SK-N-SH (cell line): ENCODE measurements at regions of chr13 and their contacts with region 1.

Region 1: DNA sequence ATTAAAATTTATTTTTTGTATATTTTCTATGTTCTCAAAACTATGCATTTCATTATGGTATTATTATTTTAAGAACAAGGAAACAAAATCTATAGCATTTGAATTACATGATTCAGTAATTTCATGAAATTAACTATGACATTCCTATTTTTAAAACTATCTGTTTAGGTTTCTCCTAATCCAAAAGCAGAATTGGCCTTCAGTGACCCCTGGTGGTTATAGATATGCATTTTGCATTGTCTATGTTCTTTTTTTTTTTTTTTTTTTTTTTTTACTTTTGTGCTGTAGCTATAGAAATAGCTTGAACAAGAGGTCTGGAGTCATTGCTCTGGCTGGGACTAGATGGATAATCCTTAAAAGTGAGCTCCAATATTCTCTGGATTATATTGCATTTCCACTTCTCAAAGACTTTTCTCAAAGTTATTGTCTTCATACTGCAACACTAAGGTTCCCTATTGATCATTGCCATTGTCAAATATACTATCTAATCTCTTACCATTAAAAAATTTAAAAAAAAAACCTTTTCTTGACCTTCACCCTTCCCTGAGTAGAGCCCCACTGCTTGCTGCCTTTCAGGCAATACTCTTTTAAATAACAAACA is 15.9 kb upstream of the DNAJC3 start:
- DNase-seq: peak; percentile 39
- H3K4me3 ChIP-seq: no peak overlapping the region
- H3K27ac ChIP-seq: no peak overlapping the region
- H3K4me1 ChIP-seq: no peaks in the 10 kb centered on the region
- H3K27me3 ChIP-seq: no peaks in the 10 kb centered on the region
- CTCF ChIP-seq: peak; percentile 80
- EP300 ChIP-seq: no peak
- RAD21 ChIP-seq: peak; percentile 82

Region 2: GRCh38 chr13:95480131-95480545 is 180.9 kb before region 1 on chr13:
- CTCF ChIA-PET with region 1: no interaction called
- POLR2A ChIA-PET with region 1: no interaction called
- DNase-seq: no peak
- H3K4me3 ChIP-seq: no peak overlapping the region
- H3K27ac ChIP-seq: no peak overlapping the region
- H3K4me1 ChIP-seq: peaks cover 0 to 11% of the 10 kb centered on the region in 2 experiments; a peak in 1 of 4 replicates
- H3K27me3 ChIP-seq: no peaks in the 10 kb centered on the region
- CTCF ChIP-seq: no peak
- EP300 ChIP-seq: no peak
- RAD21 ChIP-seq: no peak

Region 3: DNA sequence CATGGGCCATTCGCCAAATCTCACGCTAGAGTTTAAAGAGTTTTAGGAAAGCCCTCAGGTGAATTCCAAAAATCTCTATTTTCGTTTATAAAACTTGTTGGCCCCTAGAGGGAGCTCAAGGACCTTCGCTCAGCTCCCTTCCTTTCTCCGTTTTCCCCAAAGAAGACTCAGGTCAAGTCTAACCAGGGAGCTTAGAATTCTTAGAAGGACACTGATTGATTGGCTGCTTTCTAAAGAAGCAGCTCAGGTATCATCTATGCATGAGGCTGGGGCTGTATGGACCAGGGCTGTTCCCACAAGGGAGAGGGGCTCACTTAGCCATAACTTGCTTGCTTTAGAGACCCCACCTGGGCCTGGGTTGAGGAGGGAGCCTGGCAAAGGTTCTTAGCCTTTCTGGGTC is 37.1 kb before region 1 on chr13:
- CTCF ChIA-PET with region 1: interaction called, 26 read pairs
- POLR2A ChIA-PET with region 1: no interaction called
- DNase-seq: peak; percentile 52
- H3K4me3 ChIP-seq: no peak overlapping the region
- H3K27ac ChIP-seq: no peak overlapping the region
- H3K4me1 ChIP-seq: no peaks in the 10 kb centered on the region
- H3K27me3 ChIP-seq: no peaks in the 10 kb centered on the region
- CTCF ChIP-seq: peak; percentile 80
- EP300 ChIP-seq: no peak
- RAD21 ChIP-seq: peak; percentile 88

Region 4: GRCh38 chr13:95644601-95645052 is 16.5 kb before region 1 on chr13 and contains the start of gene DZIP1:
- CTCF ChIA-PET with region 1: interaction called, 11 read pairs
- POLR2A ChIA-PET with region 1: no interaction called
- DNase-seq: peak; percentile 90
- H3K4me3 ChIP-seq: peak within 1 kb of the TSS; percentile 79 to 85
- H3K27ac ChIP-seq: peak within 1 kb of the TSS; percentile 64 to 90
- H3K4me1 ChIP-seq: peaks cover 0 to 21% of the 10 kb centered on the region in 2 experiments; a peak in 2 of 4 replicates
- H3K27me3 ChIP-seq: no peaks in the 10 kb centered on the region
- CTCF ChIP-seq: no peak
- EP300 ChIP-seq: peak in 1 of 2 experiments; percentile 14; a peak in 1 of 4 replicates
- RAD21 ChIP-seq: no peak
- polyA plus RNA-seq, gene DZIP1: 15.0 and 15.2 TPM in 2 replicates

Region 5: DNA sequence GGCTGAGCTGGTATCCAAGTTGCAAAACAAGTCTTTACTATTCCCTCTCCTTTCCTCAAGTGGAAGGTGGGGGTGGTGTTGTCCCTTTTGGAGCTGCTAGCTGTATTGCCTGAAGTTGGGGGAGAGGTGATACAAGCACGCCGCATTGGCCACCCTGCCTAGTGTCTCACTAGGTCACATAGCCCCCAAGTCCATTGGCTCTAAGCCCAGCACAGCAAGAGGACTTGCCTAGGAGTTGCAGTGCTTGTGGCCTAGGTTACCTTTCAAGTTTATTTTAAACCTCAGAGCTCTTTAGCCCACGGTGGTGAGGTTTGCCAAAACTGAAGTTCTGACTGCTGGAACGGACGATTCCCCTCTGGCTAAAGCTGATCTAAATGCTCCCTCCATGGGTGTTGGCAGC is 10.5 kb after region 1 on chr13:
- CTCF ChIA-PET with region 1: interaction called, 10 read pairs
- POLR2A ChIA-PET with region 1: no interaction called
- DNase-seq: no peak
- H3K4me3 ChIP-seq: no peak overlapping the region; a peak in 1 of 4 replicates
- H3K27ac ChIP-seq: no peak overlapping the region
- H3K4me1 ChIP-seq: no peaks in the 10 kb centered on the region; a peak in 3 of 4 replicates
- H3K27me3 ChIP-seq: no peaks in the 10 kb centered on the region
- CTCF ChIP-seq: no peak
- EP300 ChIP-seq: no peak
- RAD21 ChIP-seq: no peak